ENCODE measurements at regions of chr19 and their contacts with region 1.

Region 1: DNA sequence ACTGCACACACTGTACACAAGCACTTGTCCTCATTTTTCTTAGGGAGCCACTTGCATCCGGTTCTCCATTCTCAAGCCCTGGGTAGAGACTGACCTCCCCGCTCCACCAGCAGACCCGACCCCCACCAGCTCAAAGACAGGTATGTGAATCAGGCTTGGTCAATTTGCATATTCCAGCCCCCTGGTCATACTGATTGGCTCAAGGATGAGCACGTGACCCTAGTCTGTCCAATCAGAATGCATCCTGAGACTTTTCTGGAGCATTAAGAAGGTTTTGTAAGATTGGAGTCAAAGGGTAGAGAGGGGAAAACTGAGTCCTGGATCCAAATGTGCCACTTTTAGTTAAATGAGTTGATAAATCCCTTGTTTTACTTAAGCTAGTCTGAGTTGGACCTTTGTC is 34.1 kb downstream of the NOTCH3 start:
- DNase-seq: no peak
- H3K4me3 ChIP-seq: no peak overlapping the region
- H3K27ac ChIP-seq: no peak overlapping the region
- H3K4me1 ChIP-seq: no peaks in the 10 kb centered on the region
- H3K27me3 ChIP-seq: no peaks in the 10 kb centered on the region
- CTCF ChIP-seq: no peak
- EP300 ChIP-seq: no peak
- POLR2A ChIP-seq: no peak

Region 2: DNA sequence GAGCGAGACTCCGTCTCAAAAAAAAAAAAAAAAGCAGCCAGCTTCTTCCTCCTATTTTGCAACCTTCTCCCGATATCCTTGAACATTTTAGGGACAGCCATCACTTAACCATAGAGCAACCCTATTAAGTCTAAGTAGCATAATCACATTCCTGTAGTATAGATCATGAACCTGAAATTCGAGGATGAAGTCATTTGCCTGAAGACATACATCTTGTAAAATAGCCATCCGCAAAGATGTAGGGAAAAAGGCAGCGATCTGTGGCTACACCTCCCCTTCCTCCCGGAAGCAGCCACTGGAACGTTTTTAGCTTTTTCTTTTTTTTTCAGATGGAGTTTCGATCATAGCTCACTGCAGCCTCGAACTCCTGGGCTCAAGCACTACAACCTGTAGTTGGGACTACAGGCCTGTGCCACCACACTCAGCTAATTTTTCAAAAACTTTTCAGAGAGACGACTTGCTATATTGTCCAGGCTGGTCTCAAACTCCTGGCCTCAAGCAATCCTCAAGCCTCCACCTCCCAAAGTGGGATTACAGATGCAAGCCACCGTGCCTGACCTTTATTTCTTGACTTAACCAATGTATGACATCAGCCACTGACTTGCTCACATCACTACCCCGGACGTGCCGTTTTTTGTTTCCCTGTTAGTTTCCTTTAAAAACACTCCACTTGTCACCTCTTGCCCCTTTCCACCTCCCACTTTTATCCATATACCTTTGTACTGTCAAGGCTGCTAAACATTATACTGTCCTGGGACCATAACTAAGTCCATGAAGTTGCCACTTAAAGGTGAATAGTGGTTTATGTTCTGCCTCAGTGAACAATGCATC is 67.6 kb after region 1 on chr19:
- intact Hi-C with region 1: no loop called
- DNase-seq: no peak
- H3K4me3 ChIP-seq: no peak overlapping the region
- H3K27ac ChIP-seq: no peak overlapping the region
- H3K4me1 ChIP-seq: peaks cover 17 to 25% (median 22%) of the 10 kb centered on the region in 4 donors
- H3K27me3 ChIP-seq: peaks cover 5 to 37% (median 20%) of the 10 kb centered on the region in 3 donors
- CTCF ChIP-seq: no peak
- EP300 ChIP-seq: no peak
- POLR2A ChIP-seq: no peak

Region 3: GRCh38 chr19:15563325-15563794 is 396.7 kb after region 1 on chr19:
- intact Hi-C with region 1: loop called (anchors 5 kb)
- DNase-seq: peak; percentile 61 to 79
- H3K4me3 ChIP-seq: no peak overlapping the region
- H3K27ac ChIP-seq: no peak overlapping the region
- H3K4me1 ChIP-seq: peaks cover 0 to 12% (median 10%) of the 10 kb centered on the region in 4 donors
- H3K27me3 ChIP-seq: peaks cover 0 to 39% (median 0%) of the 10 kb centered on the region in 3 donors
- CTCF ChIP-seq: no peak
- EP300 ChIP-seq: no peak
- POLR2A ChIP-seq: no peak